ENCODE measurements at regions of chr1 and their contacts with region 1.

Region 1: GRCh38 chr1:221337106-221337505 is 404.8 kb downstream of the DUSP10 start:
- DNase-seq: no peak
- ATAC-seq: no peak
- H3K4me3 ChIP-seq: no peak overlapping the region
- H3K4me3 Mint-ChIP-seq: no peak overlapping the region
- H3K27ac ChIP-seq: no peak overlapping the region
- H3K27ac Mint-ChIP-seq: no peak overlapping the region
- H3K4me1 ChIP-seq: no peaks in the 10 kb centered on the region
- H3K4me1 Mint-ChIP-seq: no peaks in the 10 kb centered on the region
- H3K27me3 ChIP-seq: no peaks in the 10 kb centered on the region
- H3K27me3 Mint-ChIP-seq: peaks cover 0 to 9% of the 10 kb centered on the region in 2 donors

Region 2: GRCh38 chr1:221405146-221405545 is 68.0 kb after region 1 on chr1:
- CTCF ChIA-PET with region 1: no interaction called
- POLR2A ChIA-PET with region 1: no interaction called
- DNase-seq: no peak
- ATAC-seq: no peak
- H3K4me3 ChIP-seq: no peak overlapping the region
- H3K4me3 Mint-ChIP-seq: no peak overlapping the region
- H3K27ac ChIP-seq: no peak overlapping the region
- H3K27ac Mint-ChIP-seq: no peak overlapping the region
- H3K4me1 ChIP-seq: no peaks in the 10 kb centered on the region
- H3K4me1 Mint-ChIP-seq: no peaks in the 10 kb centered on the region
- H3K27me3 ChIP-seq: no peaks in the 10 kb centered on the region
- H3K27me3 Mint-ChIP-seq: peaks cover 5 to 7% of the 10 kb centered on the region in 2 donors

Region 3: GRCh38 chr1:221478050-221478949 is 141.2 kb after region 1 on chr1:
- CTCF ChIA-PET with region 1: no interaction called
- POLR2A ChIA-PET with region 1: no interaction called
- DNase-seq: peak in 34 of 35 experiments; percentile 5 to 66 (median 35)
- ATAC-seq: peak; percentile 76 to 94 (median 86)
- H3K4me3 ChIP-seq: no peak overlapping the region
- H3K4me3 Mint-ChIP-seq: no peak overlapping the region
- H3K27ac ChIP-seq: no peak overlapping the region
- H3K27ac Mint-ChIP-seq: no peak overlapping the region
- H3K4me1 ChIP-seq: no peaks in the 10 kb centered on the region
- H3K4me1 Mint-ChIP-seq: peaks cover 0 to 4% (median 4%) of the 10 kb centered on the region in 3 donors
- H3K27me3 ChIP-seq: no peaks in the 10 kb centered on the region
- H3K27me3 Mint-ChIP-seq: peaks cover 4% of the 10 kb centered on the region in 2 donors

Region 4: DNA sequence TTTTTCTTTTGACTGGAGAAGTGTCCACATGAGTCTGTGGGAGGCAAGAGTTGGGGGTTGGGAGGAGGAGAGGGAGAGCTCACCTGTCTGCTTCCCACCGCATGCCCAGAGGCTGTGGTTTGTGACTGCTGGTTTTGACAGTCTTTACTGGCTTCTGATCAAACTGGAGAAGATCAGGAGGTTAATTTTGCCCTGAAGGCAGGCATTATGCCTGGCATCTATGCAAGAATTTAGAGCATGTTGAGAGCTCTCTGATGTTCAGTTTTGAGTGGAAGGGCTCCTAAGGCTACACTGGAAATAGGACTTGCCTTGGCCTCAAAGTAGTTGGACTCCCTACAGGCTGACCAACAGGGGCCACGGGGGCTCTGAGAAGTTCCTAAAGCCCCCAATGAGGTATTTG is 1704.4 kb after region 1 on chr1:
- CTCF ChIA-PET with region 1: interaction called in 1 of 2 experiments, 10 read pairs
- POLR2A ChIA-PET with region 1: no interaction called
- DNase-seq: no peak
- ATAC-seq: no peak
- H3K4me3 ChIP-seq: no peak overlapping the region
- H3K4me3 Mint-ChIP-seq: no peak overlapping the region
- H3K27ac ChIP-seq: no peak overlapping the region
- H3K27ac Mint-ChIP-seq: no peak overlapping the region
- H3K4me1 ChIP-seq: no peaks in the 10 kb centered on the region
- H3K4me1 Mint-ChIP-seq: no peaks in the 10 kb centered on the region
- H3K27me3 ChIP-seq: peaks cover 0 to 35% of the 10 kb centered on the region in 2 experiments
- H3K27me3 Mint-ChIP-seq: peaks cover 11 to 22% of the 10 kb centered on the region in 2 donors